ENCODE measurements at regions of chr11 and their contacts with region 1.

Region 1: DNA sequence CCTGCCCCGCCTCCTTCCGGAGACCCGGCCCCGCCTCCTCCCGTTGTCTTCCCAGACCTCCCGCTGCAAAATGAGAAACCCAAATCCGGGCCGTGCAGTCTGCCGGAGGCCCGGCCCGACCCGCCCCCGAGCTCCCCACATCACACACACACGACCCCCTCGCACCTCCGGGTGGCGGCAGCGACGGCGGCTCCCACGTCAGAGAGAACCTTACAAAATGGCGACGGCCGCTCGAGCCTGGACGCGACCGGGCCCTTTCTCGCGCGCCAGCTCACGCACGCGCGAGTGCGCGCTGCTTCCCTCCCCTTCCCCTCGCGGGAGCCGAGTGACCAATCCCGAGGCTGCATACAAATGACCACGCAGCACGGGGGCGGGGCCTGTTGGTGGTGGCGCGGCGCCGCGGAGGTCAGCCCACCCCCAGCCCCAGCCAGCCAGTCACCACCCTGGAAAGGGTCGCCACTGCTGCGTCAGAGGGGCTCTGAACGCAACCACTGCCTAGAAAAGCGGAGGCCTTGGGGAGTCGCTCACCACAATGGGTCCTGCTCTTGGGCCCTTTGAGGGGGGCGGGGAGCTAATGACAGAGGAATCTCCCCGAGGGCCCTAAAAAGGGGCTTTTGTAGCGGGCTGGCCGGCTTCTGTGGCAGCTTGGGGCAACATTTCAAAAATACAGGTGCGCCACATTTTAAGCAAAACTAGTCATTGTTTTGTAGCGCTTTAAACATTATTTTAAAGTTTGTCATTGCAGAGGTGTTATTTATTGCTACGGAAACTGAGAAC is at the start of gene RBM4B:
- DNase-seq: peak; percentile 99
- ATAC-seq: peak; percentile 91
- H3K4me3 ChIP-seq: peak within 1 kb of the TSS; percentile 86 to 95 (median 89)
- H3K4me3 Mint-ChIP-seq: peak within 1 kb of the TSS; percentile 99
- H3K27ac ChIP-seq: peak within 1 kb of the TSS; percentile 91 to 99
- H3K27ac Mint-ChIP-seq: peak within 1 kb of the TSS; percentile 99
- H3K4me1 ChIP-seq: peaks cover 24 to 35% of the 10 kb centered on the region in 2 donors
- H3K4me1 Mint-ChIP-seq: peaks cover 33% of the 10 kb centered on the region
- H3K27me3 ChIP-seq: no peaks in the 10 kb centered on the region
- H3K27me3 Mint-ChIP-seq: no peaks in the 10 kb centered on the region
- CTCF ChIP-seq: no peak
- total RNA-seq, gene RBM4B: 61.3 and 66.4 TPM in 2 replicates

Region 2: DNA sequence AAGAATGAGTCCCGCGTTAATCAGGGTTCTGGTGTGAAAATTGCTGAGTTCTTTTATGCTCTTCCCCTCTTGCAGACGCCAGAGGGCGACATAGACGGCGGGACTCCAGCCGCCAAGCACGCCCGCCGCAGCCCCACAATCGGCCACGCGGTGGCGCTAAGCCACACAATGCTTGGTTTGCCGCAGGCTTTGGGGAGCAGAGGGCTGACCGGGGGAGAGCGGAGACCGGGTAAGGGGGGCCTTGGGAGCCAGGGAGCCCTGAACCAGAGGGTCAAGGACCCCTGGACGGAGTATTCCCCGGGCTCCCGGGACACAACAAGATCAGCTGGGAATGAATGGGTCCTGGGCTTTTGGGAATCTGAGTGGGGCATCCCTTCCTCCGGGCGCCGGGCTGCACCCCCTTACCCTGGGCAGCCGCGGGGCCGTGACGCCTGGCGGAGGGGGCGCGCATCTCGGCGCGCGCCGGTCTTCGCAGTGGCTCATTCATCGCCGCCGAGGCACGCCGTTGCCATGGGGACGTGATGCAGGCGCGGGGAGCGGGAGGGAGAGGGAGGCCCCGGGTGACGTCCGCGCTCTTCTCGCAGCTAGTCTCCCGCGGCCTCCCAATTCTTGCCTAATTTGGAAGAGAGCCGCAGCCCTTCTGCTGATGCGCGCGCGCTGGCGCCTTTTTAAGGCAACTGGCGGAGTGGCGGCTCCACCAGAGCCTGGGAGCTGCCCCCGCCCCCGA is 269.1 kb before region 1 on chr11:
- CTCF ChIA-PET with region 1: interaction called, 92 read pairs
- POLR2A ChIA-PET with region 1: interaction called, 15 read pairs
- intact Hi-C with region 1: no loop called
- DNase-seq: peak; percentile 93
- ATAC-seq: peak; percentile 96
- H3K4me3 ChIP-seq: peak overlapping the region in 4 of 5 experiments; percentile 5 to 57 (median 27)
- H3K4me3 Mint-ChIP-seq: peak overlapping the region; percentile 79
- H3K27ac ChIP-seq: no peak overlapping the region
- H3K27ac Mint-ChIP-seq: no peak overlapping the region
- H3K4me1 ChIP-seq: peaks cover 5 to 6% of the 10 kb centered on the region in 2 donors
- H3K4me1 Mint-ChIP-seq: peaks cover 4% of the 10 kb centered on the region
- H3K27me3 ChIP-seq: peaks cover 0 to 49% (median 12%) of the 10 kb centered on the region in 4 experiments
- H3K27me3 Mint-ChIP-seq: peaks cover 53% of the 10 kb centered on the region
- CTCF ChIP-seq: peak; percentile 100

Region 3: DNA sequence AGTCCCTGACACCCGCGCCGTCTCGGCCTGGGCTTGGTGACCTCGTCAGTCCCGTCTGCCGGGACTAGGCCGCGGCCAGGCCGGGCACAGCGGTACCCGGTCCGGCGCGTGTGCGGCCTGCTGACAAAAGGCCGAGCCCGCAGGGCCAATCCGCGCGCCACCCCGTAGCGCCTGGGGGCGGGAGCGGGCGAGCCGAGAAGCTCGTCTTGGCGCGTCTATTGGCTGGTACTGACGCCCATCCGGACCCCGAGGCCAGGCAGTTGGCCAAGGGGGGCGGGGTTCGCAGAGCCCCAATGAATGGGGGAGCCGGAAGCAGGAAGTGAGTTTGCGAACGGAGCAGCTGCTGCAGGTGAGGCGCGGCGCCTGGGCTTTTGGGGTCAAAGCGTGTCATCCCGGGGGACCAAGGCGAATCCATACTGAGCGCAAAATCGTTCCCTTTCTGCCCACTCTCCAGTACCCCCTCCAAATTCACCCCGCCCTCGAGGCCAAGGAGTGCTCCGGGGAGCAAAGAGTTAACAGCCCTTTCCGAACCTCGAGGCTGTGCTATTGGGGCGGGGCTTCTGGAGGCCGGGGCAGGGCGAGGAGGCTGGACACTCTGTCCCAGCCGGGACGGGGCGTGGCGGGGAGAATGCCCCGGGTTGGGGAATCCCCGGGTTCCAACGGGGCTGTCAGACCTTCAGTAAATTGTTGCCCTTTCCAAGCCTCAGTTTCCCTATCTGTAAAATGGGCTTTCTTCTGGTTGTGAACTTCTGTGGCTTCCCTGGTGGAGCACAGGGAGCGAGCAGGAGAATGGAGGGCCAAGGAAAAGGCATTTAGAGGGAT is 197.5 kb before region 1 on chr11 and contains the start of gene DPP3:
- CTCF ChIA-PET with region 1: interaction called, 24 read pairs
- POLR2A ChIA-PET with region 1: interaction called, 13 read pairs
- intact Hi-C with region 1: loop called (anchors 1 kb)
- DNase-seq: peak; percentile 96
- ATAC-seq: peak; percentile 97
- H3K4me3 ChIP-seq: peak within 1 kb of the TSS; percentile 36 to 92 (median 71)
- H3K4me3 Mint-ChIP-seq: peak within 1 kb of the TSS; percentile 92
- H3K27ac ChIP-seq: peak within 1 kb of the TSS; percentile 63 to 85
- H3K27ac Mint-ChIP-seq: peak within 1 kb of the TSS; percentile 93
- H3K4me1 ChIP-seq: peaks cover 10 to 20% of the 10 kb centered on the region in 2 donors
- H3K4me1 Mint-ChIP-seq: peaks cover 20% of the 10 kb centered on the region
- H3K27me3 ChIP-seq: no peaks in the 10 kb centered on the region
- H3K27me3 Mint-ChIP-seq: no peaks in the 10 kb centered on the region
- CTCF ChIP-seq: no peak
- total RNA-seq, gene DPP3: 21.5 and 22.7 TPM in 2 replicates

Region 4: GRCh38 chr11:66579017-66579606 is 98.7 kb before region 1 on chr11:
- CTCF ChIA-PET with region 1: interaction called, 301 read pairs
- POLR2A ChIA-PET with region 1: interaction called, 13 read pairs
- intact Hi-C with region 1: no loop called
- DNase-seq: peak; percentile 85
- ATAC-seq: peak; percentile 91
- H3K4me3 ChIP-seq: peak overlapping the region in 2 of 5 experiments; percentile 1 to 12
- H3K4me3 Mint-ChIP-seq: peak overlapping the region; percentile 18
- H3K27ac ChIP-seq: no peak overlapping the region
- H3K27ac Mint-ChIP-seq: no peak overlapping the region
- H3K4me1 ChIP-seq: peaks cover 3 to 7% of the 10 kb centered on the region in 2 donors
- H3K4me1 Mint-ChIP-seq: peaks cover 8% of the 10 kb centered on the region
- H3K27me3 ChIP-seq: no peaks in the 10 kb centered on the region
- H3K27me3 Mint-ChIP-seq: peaks cover 24% of the 10 kb centered on the region
- CTCF ChIP-seq: peak; percentile 84

Region 5: GRCh38 chr11:66638177-66639065 is 39.4 kb before region 1 on chr11 and contains the start of gene RBM4:
- CTCF ChIA-PET with region 1: interaction called, 54 read pairs
- POLR2A ChIA-PET with region 1: interaction called, 28 read pairs
- intact Hi-C with region 1: loop called (anchors 1 kb)
- DNase-seq: peak; percentile 99
- ATAC-seq: peak; percentile 92
- H3K4me3 ChIP-seq: peak within 1 kb of the TSS; percentile 79 to 95 (median 88)
- H3K4me3 Mint-ChIP-seq: peak within 1 kb of the TSS; percentile 99
- H3K27ac ChIP-seq: peak within 1 kb of the TSS; percentile 77 to 87
- H3K27ac Mint-ChIP-seq: peak within 1 kb of the TSS; percentile 96
- H3K4me1 ChIP-seq: peaks cover 49 to 54% of the 10 kb centered on the region in 2 donors
- H3K4me1 Mint-ChIP-seq: peaks cover 63% of the 10 kb centered on the region
- H3K27me3 ChIP-seq: no peaks in the 10 kb centered on the region
- H3K27me3 Mint-ChIP-seq: no peaks in the 10 kb centered on the region
- CTCF ChIP-seq: peak; percentile 10
- total RNA-seq, gene RBM4: 199 and 203 TPM in 2 replicates

Region 6: GRCh38 chr11:66855574-66856495 is 178.0 kb after region 1 on chr11:
- CTCF ChIA-PET with region 1: interaction called, 11 read pairs
- POLR2A ChIA-PET with region 1: interaction called, 4 read pairs
- intact Hi-C with region 1: no loop called
- DNase-seq: no peak
- ATAC-seq: peak; percentile 87
- H3K4me3 ChIP-seq: peak overlapping the region; percentile 11 to 74 (median 70)
- H3K4me3 Mint-ChIP-seq: peak overlapping the region; percentile 94
- H3K27ac ChIP-seq: peak overlapping the region; percentile 65 to 78
- H3K27ac Mint-ChIP-seq: peak overlapping the region; percentile 92
- H3K4me1 ChIP-seq: peaks cover 5 to 20% of the 10 kb centered on the region in 2 donors
- H3K4me1 Mint-ChIP-seq: peaks cover 14% of the 10 kb centered on the region
- H3K27me3 ChIP-seq: no peaks in the 10 kb centered on the region
- H3K27me3 Mint-ChIP-seq: no peaks in the 10 kb centered on the region
- CTCF ChIP-seq: no peak